Activated T-helper 2 cell treated with anti-CD3 and anti-CD28 coated beads, Interferon-gamma antibody, Interleukin-2, Interleukin-4, amounts not matched to agents 10 μg/mL and 5 μg/mL and 100 μg/mL, durations not matched to agents 14 hours and 24 hours and 36 hours (primary cell): ENCODE measurements at regions of chr1 and their contacts with region 1.

Region 1: DNA sequence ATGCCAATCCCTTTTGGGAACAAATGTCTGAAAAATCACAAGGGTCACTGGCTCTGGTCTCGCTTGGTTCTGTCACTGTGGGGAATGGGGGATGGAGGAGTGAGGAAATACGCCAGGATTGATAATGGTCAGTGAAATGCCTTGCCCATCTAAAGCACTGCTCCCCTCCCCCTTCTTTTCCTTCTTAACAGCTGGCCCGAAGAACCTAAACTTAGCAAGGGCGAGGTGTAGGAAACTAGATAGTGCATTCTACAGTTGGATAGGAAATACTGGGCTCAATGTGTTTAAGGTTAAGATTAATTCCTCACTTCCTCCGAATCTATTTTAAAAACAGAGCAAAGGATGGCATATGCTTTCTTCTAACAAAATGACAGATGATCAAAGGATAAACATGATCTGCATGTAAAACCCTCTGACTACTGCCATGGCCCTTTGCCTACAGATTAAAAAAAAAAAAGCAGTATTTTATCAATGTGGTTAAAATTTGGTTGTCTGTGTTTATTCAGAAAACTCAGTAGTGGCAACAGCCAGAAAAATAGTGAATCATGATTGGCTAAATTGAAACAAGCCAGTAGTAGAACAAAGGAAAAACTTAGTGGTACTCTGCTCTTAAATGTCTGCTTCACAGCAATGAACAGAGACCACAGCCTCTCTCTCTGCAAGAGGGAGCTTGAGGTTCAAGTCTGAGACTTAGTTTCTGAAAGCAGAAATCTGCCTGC is 86.1 kb upstream of the VAV3 start:
- DNase-seq: no peak
- H3K4me3 Mint-ChIP-seq: no peak overlapping the region
- H3K27ac Mint-ChIP-seq: peak overlapping the region; percentile 43
- H3K4me1 Mint-ChIP-seq: peaks cover 4% of the 10 kb centered on the region
- H3K27me3 Mint-ChIP-seq: peaks cover 6% of the 10 kb centered on the region

Region 2: DNA sequence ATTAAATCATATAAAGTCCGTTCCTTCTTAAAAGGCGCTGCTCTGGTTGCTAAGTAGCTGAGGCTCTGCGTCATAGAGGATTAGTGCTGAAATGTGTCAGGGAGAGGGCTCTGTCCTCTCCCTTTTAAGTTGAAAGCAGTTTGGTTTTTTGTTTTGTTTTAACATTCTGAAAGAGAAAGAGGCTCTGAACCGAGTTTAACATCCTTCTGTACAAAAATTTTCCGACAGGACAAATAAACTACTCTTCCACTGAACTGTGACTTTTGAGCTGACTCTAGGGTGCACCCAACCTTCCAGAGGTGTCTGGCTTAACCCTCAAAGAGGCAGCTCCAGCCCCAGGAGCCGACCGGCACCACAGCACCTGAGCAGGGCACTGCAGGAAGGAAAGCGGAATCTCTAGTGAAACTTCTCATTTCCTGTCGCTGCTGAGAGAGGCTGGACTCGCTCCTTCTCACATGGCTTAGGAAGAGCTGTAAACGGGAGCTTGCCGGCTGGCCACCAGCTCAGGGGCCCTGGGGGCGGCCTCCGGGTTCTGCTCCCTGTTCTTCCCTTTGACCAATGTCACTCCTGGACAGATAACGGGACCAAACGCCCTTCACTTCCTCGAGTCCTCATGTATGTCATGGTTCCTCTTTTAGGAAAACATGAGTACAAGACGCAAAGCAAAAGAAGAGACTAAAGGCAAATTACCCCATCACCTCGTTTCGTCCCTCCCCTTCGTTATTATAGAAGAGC is 87.3 kb before region 1 on chr1:
- intact Hi-C with region 1: loop called (anchors 2 kb)
- DNase-seq: peak; percentile 32
- H3K4me3 Mint-ChIP-seq: peak overlapping the region; percentile 83
- H3K27ac Mint-ChIP-seq: peak overlapping the region; percentile 85
- H3K4me1 Mint-ChIP-seq: peaks cover 25% of the 10 kb centered on the region
- H3K27me3 Mint-ChIP-seq: peaks cover 3% of the 10 kb centered on the region

Region 3: GRCh38 chr1:107991371-107992066 is 59.6 kb before region 1 on chr1:
- intact Hi-C with region 1: no loop called
- DNase-seq: no peak
- H3K4me3 Mint-ChIP-seq: no peak overlapping the region
- H3K27ac Mint-ChIP-seq: no peak overlapping the region
- H3K4me1 Mint-ChIP-seq: no peaks in the 10 kb centered on the region
- H3K27me3 Mint-ChIP-seq: peaks cover 7% of the 10 kb centered on the region

Region 4: GRCh38 chr1:108034406-108034805 is 16.7 kb before region 1 on chr1:
- intact Hi-C with region 1: no loop called
- DNase-seq: no peak
- H3K4me3 Mint-ChIP-seq: no peak overlapping the region
- H3K27ac Mint-ChIP-seq: no peak overlapping the region
- H3K4me1 Mint-ChIP-seq: no peaks in the 10 kb centered on the region
- H3K27me3 Mint-ChIP-seq: peaks cover 4% of the 10 kb centered on the region

Region 5: DNA sequence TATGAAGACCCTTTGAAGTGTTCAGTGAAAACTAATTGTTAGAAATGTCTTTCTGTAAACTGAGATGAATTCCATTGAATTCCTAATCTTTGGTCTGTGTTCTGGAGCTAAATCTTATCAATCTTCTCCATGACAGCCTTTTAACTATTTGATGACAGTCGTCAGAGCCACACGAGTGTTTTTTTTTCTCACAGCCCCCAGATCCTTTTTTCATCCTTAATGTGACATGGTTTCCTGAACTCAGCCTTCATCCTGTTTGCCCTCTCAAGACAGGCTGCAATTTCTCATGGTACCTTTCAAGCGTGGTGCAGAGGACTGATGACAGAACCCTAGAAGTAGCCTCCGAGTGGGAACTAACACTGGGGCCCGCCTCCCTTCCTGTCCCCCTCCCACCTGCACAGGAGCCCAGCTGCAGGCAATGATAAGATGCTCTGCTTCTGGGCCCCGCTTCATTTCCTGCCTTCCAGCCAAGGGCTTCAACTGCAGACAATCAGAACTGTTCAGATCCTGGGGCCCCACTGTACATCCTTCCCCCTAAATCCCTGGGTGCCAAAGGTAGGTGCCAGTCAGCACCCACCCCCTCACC is 28.5 kb after region 1 on chr1:
- intact Hi-C with region 1: loop called (anchors 2 kb)
- DNase-seq: peak; percentile 24
- H3K4me3 Mint-ChIP-seq: no peak overlapping the region
- H3K27ac Mint-ChIP-seq: peak overlapping the region; percentile 31
- H3K4me1 Mint-ChIP-seq: peaks cover 52% of the 10 kb centered on the region
- H3K27me3 Mint-ChIP-seq: no peaks in the 10 kb centered on the region